ENCODE measurements at regions of chr11 and their contacts with region 1.

Region 1: DNA sequence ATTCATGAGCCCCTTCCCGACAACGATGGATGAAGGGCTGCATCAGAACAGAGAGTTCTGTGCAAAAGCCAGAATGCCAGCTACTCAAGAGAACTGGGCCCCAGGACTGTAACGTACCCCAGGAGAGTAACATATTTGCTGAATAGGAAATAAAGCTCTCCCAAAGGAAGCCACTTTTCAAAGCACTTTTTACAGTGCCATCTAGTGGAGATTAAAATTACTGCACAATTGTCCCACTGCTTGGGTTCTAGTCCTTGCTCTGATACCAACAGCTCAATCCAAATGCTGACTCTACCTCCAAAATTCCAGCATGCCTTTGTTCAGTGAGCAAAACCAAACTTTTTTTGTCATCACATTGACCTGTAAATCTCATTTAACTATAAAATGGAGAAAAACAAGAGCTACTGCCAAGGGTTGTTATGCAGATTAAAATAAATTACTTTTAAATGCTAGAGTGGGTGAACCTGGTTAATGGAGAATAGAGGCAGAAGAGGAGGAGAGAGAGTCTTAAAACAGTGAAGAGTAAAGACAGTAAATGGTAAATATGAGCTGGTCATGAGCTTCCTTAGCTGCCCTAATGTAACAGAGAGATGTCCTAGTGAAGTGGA is 87.6 kb upstream of the FSHB start:
- DNase-seq: no peak
- ATAC-seq: no peak
- H3K4me3 Mint-ChIP-seq: no peak overlapping the region
- H3K27ac Mint-ChIP-seq: no peak overlapping the region
- H3K4me1 Mint-ChIP-seq: no peaks in the 10 kb centered on the region
- H3K27me3 Mint-ChIP-seq: peaks cover 10% of the 10 kb centered on the region
- CTCF ChIP-seq: peak; percentile 81

Region 2: GRCh38 chr11:29343465-29344333 is 799.5 kb before region 1 on chr11:
- CTCF ChIA-PET with region 1: interaction called, 10 read pairs
- POLR2A ChIA-PET with region 1: no interaction called
- intact Hi-C with region 1: no loop called
- DNase-seq: peak; percentile 48
- ATAC-seq: peak; percentile 64
- H3K4me3 Mint-ChIP-seq: no peak overlapping the region
- H3K27ac Mint-ChIP-seq: no peak overlapping the region
- H3K4me1 Mint-ChIP-seq: no peaks in the 10 kb centered on the region
- H3K27me3 Mint-ChIP-seq: no peaks in the 10 kb centered on the region
- CTCF ChIP-seq: peak; percentile 81

Region 3: DNA sequence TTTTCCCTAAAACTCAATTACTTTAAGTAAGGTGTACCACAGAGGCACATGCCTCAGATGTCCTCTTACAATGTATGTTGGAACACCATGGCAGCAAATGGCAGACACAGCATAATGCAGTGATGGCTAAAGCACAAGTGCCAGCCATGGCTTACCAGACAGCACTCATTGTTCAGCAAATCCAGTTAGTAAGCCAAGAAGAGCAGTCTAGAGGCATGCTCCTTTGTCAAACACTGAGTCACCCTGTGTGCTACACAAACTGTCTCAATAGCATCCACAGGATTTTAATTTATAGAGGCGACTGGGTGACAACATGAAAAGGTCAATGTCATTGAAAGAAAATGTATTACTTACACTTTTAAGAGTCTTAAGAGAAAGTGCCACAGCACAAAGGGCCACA is 267.0 kb before region 1 on chr11:
- CTCF ChIA-PET with region 1: no interaction called
- POLR2A ChIA-PET with region 1: no interaction called
- intact Hi-C with region 1: no loop called
- DNase-seq: no peak
- ATAC-seq: no peak
- H3K4me3 Mint-ChIP-seq: no peak overlapping the region
- H3K27ac Mint-ChIP-seq: no peak overlapping the region
- H3K4me1 Mint-ChIP-seq: no peaks in the 10 kb centered on the region
- H3K27me3 Mint-ChIP-seq: no peaks in the 10 kb centered on the region
- CTCF ChIP-seq: no peak

Region 4: DNA sequence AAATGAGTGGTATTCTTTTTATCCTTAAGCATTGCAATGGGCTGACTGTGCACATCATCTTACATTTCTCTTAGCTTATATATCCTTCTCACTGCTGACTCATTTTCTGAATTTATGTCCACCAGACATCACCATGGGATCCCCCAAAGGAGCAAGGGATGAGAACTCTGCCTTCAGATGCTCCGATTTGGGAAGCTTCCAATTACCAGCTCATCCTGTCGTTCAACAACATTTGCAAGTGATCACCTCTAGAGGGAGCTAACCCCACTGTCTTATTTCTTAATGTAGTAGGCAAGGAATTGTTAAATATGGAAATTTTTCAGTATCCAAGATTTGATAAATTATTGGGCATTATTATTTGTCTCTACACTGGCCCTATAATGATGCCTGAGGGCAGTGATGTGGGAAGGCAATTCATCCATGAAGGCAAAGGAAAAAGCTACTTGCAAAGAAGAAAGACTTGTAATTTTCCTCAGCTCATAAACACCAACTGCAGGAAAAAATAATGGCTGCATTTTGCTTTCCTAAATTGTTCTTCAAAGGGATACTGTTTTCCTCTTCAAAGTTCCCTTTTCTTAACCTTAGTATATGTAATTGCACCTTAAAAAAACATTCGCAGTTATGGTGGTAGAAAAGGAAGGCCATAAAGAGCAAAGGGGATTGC is 14.8 kb before region 1 on chr11:
- CTCF ChIA-PET with region 1: interaction called, 54 read pairs
- POLR2A ChIA-PET with region 1: no interaction called
- intact Hi-C with region 1: no loop called
- DNase-seq: no peak
- ATAC-seq: no peak
- H3K4me3 Mint-ChIP-seq: no peak overlapping the region
- H3K27ac Mint-ChIP-seq: no peak overlapping the region
- H3K4me1 Mint-ChIP-seq: no peaks in the 10 kb centered on the region
- H3K27me3 Mint-ChIP-seq: no peaks in the 10 kb centered on the region
- CTCF ChIP-seq: peak; percentile 80

Region 5: DNA sequence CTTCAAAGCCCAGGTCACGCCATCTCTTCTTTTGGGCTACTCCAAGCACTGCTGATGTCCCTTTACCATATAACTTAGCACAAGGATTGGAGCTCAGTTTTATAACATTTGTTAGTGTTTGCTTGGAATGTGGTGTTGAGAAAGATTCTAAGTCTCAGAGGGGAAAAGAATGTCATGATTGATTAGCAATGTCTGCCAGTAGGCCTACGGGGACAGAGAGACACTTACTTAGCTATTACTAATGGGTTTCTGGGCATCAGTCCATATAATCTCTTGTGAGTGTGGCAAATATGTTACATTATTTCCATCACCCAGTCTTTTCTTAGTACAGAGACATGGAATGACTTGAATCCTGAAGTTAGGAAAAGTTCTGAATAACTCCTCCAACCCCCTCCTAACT is 12.2 kb after region 1 on chr11:
- CTCF ChIA-PET with region 1: interaction called, 20 read pairs
- POLR2A ChIA-PET with region 1: no interaction called
- intact Hi-C with region 1: no loop called
- DNase-seq: no peak
- ATAC-seq: no peak
- H3K4me3 Mint-ChIP-seq: no peak overlapping the region
- H3K27ac Mint-ChIP-seq: no peak overlapping the region
- H3K4me1 Mint-ChIP-seq: no peaks in the 10 kb centered on the region
- H3K27me3 Mint-ChIP-seq: peaks cover 3% of the 10 kb centered on the region
- CTCF ChIP-seq: no peak

Measured in activated CD8-positive, alpha-beta T cell treated with anti-CD3 and anti-CD28 coated beads for 36 hours (primary cell).